ENCODE measurements at regions of chr11 and their contacts with region 1.

Region 1: DNA sequence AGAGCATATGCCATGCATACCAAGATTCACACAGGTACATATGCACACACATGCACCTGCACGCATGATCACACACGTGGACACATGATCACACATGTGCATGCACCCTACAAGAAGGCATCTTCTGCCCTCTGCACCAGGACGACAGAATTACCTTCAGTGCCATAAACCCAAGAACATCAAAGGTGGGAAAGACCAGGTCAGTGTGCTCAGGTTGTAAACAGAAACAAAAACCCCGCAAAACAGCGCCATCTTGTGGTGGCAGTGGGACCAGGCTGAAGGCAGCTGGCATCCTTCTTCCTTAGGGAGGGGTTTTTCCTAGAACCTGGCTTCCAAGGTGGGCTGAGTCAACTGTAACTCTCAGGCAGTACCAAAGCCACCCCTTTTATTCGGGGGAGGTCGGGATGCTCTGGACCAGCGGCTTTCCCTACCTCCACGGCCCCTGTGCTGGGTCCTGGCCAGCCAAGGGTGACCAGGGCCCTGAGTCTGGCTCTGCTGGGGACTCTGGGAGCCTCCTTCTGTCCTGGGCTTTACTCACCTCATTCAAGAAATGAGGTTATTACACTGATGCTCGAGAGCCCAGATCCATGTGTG is 69.4 kb upstream of the FGF3 start:
- DNase-seq: no peak
- H3K4me3 ChIP-seq: no peak overlapping the region
- CTCF ChIP-seq: peak; percentile 92

Region 2: DNA sequence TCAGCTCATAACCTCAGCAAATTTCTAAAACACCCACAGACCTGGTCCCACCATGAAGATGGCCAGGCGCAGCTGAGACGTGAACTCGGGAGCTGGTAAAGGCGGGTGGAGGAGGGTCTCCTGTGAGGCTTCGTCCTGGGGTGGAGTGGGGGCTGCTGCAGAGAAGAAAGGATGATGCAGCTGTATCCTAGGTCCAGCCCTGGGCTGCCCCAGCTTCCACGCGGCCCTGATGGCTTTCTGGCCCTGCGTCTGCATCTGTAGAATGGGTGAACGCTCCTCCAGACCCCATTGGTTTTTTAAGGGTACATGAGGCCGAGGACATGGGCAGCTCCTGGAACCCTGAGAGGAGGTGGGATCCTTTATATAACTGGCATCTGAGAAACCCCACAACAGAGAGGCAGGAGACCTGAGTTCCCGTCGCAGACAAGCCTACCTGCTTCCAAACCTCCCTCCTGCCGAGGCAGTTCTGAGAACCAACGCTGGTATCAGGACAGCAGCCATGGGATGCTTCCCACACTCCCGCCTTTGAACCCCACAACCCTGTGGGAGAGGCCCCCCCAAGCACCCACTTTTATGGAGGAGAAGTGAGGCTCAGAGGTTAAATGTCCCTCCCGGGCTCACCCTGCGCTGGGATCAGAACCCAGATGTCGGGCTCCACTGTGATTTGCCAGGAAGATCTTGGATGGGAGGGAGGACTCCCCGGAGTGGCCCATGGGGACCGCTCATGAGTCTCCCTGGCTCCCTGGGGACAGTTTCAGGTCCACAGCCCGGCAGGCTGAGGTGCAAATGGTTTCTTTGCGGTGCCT is 14.2 kb before region 1 on chr11:
- CTCF ChIA-PET with region 1: interaction called, 13 read pairs
- POLR2A ChIA-PET with region 1: no interaction called
- DNase-seq: no peak
- H3K4me3 ChIP-seq: no peak overlapping the region
- CTCF ChIP-seq: no peak

Region 3: DNA sequence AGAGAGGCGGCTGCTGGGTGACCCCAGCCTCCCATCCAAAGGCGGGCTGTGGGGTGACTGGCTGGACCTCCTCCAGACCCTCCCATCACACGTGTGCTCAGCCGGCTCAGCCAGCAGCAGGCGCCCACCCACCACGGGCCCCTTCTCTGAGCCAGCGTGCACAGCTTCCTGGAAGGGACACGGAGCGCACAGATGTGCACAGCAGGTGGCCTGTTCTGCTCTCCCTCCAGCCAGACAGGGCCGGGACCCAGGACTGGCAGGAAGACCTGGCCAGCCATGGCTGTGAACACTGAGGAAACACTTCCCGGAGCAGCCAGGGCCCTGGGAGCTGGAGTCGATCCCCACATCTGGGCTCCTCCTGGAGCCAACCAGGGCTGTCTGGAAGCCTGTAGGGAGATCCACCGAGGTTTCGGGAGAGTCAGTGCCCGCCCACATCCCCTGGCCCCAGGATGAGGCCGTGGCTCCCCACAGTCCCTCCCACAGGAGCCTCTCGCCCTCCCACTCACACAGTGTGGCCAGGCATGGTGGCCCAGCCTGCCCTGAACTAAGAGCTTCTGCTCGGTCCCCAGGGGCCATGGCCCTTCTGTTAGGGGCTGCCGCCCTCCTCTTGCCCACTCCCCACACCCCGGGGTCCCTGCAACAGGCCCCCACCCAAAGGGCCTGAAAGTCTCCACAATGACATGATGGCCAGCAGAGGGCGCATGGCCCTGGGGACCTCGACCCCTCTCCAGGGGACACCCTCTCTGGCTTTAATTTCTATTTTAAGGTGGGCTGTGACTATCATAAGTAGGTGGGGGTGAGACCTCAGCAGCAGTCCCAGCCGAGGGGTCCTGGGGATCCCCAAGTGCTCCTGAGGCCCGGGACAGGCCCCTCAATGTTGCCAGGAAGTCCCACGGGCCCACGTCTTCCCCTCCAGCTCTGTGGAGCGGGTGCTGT is 21.2 kb after region 1 on chr11:
- CTCF ChIA-PET with region 1: interaction called, 18 read pairs
- POLR2A ChIA-PET with region 1: no interaction called
- DNase-seq: no peak
- H3K4me3 ChIP-seq: no peak overlapping the region
- CTCF ChIP-seq: peak; percentile 57

Region 4: DNA sequence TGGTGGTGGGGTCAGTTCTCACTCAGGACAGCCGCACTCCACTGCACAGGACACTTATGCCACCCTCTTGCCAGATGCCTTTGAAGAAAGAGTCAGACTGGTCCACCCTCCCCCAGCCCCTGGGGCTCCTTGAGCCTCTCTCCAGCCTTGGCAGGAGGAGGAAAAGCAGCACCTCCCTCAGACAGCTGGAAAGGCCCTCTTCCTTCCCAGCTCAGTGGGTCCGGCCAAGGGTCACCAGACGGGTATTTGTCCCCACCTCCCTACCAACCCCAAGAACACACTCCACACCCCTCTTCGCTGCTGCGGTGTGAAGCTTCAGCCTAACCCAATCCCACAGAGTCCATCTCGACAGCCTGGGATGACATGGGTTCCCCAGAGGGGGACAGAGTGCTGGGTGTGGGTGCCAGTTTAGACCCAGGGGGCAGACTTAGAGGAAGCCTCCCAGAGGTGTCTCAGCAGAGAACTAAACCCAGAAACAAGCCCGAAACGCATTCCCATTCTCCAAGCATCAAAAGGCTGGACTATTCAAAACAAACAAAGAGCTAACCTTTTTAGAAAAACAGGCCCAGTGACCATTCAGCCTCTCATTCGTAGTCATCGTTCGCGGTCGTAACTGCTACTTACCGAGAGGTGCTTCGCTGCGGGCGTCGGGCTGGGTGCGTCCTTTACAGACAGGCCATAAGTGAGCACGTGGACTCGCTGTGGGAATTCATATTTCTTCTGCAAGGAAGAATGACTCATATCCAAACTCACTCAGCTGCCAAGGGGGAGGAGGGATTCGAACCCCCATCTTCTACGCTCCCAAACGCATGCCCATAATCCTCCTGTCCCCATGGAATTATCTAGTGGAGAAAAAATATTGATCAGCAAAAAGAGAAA is 132.0 kb after region 1 on chr11:
- CTCF ChIA-PET with region 1: no interaction called
- POLR2A ChIA-PET with region 1: no interaction called
- DNase-seq: no peak
- H3K4me3 ChIP-seq: no peak overlapping the region
- CTCF ChIP-seq: no peak

Measured in AG04449 (cell line).